ENCODE measurements at regions of chr5 and their contacts with region 1.

Region 1: DNA sequence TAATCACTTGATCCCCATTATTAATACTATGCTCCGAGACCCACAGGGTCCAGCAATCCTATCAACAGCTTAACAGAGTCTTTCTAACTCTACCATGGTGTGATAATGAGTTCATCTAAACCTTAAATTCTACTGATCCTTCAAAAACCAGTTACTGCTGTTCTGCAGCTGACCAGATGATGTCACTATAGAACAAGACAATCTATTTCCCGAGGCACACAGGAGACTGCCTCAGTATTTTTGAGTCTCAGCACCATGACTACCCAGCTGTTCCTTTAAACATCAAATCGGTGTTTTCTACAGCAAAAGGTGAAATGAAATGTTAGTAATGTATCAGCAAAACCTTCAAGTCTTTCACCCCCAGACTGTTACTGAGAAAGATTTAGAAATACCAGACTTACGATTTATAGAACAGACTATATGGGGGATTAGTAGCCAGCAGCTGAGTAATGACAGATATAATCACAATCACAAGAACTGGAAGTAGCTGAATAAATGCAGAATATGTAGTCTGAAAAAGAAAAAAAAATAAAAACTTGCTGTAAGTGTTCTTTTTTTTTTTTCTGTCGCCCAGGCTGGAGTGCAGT is 16.9 kb downstream of the DNAJC18 start:
- DNase-seq: no peak
- H3K4me3 ChIP-seq: no peak overlapping the region
- CTCF ChIP-seq: peak; percentile 72

Region 2: GRCh38 chr5:138967791-138968448 is 454.5 kb before region 1 on chr5:
- CTCF ChIA-PET with region 1: no interaction called
- POLR2A ChIA-PET with region 1: no interaction called
- DNase-seq: no peak
- H3K4me3 ChIP-seq: no peak overlapping the region
- CTCF ChIP-seq: no peak

Region 3: DNA sequence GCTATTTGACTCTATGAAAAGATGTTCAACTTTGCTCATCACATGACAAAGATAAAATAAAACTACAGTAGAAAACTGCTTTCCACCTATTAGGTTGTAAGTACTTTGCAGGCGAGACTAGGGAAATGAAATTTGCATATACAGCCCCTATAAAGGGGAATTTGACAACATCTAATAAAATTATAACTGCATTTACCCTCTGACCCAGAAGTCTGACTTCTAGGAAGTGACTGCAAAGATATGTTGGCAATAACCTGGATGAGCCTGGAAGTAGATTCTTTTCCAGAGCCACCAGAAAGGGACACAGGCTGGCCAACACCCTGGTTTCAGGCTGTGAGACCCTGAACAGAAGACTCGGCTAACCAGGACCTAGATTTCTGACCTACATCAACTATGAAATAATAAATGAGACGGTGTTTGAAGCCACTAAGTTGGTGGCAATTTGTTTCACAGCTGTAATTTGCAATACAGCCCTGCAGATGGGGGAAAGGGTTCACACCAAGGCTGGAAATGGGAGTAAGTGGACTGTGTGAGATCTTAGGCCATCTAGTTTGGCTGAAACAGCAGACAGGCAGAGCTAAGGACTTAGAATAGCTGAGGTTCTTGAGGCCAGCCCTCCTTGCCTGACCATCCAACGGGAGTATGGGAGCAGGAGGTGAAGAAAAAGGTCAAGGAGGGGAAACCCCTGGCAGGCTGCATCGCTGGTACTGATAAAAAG is 330.8 kb before region 1 on chr5:
- CTCF ChIA-PET with region 1: no interaction called
- POLR2A ChIA-PET with region 1: no interaction called
- DNase-seq: no peak
- H3K4me3 ChIP-seq: no peak overlapping the region
- CTCF ChIP-seq: no peak

Region 4: GRCh38 chr5:139439013-139439903 is 16.9 kb after region 1 on chr5 and contains the start of gene DNAJC18:
- CTCF ChIA-PET with region 1: interaction called, 62 read pairs
- POLR2A ChIA-PET with region 1: interaction called, 3 read pairs
- DNase-seq: no peak
- H3K4me3 ChIP-seq: peak within 1 kb of the TSS; percentile 91
- CTCF ChIP-seq: no peak

Region 5: GRCh38 chr5:139482050-139482889 is 59.9 kb after region 1 on chr5 and contains the start of gene STING1:
- CTCF ChIA-PET with region 1: interaction called, 17 read pairs
- POLR2A ChIA-PET with region 1: interaction called, 3 read pairs
- DNase-seq: peak; percentile 87
- H3K4me3 ChIP-seq: peak within 1 kb of the TSS; percentile 71
- CTCF ChIP-seq: no peak

Region 6: DNA sequence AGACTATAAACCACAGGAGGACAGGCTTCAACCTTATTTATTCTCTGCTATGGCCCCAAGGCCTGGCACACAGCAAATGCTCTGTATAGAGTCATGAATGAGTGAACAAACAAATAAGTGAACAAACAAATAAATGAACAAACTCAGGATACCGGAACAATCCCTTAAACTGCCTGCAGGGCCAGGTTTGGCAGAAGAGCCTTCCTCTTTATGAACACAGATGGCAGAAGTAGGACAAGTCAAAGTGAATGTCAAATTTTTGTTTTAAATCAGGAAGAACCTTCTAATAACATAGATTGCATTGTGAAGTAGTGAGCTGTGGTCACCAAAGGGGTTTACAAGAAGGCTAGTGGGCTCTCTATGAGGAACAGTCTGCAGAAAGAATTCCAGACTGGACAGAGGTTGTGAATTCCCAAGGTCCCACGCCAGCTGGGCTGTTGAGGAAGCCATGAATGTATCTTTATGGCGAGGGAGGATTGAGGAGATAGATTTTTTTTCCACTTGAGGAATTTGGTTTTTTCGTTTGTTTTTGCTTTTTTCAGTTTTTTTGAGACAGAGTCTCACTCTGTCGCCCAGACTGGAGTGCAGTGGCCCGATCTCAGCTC is 90.5 kb after region 1 on chr5:
- CTCF ChIA-PET with region 1: interaction called, 730 read pairs
- POLR2A ChIA-PET with region 1: interaction called, 4 read pairs
- DNase-seq: no peak
- H3K4me3 ChIP-seq: no peak overlapping the region
- CTCF ChIP-seq: no peak

Region 7: DNA sequence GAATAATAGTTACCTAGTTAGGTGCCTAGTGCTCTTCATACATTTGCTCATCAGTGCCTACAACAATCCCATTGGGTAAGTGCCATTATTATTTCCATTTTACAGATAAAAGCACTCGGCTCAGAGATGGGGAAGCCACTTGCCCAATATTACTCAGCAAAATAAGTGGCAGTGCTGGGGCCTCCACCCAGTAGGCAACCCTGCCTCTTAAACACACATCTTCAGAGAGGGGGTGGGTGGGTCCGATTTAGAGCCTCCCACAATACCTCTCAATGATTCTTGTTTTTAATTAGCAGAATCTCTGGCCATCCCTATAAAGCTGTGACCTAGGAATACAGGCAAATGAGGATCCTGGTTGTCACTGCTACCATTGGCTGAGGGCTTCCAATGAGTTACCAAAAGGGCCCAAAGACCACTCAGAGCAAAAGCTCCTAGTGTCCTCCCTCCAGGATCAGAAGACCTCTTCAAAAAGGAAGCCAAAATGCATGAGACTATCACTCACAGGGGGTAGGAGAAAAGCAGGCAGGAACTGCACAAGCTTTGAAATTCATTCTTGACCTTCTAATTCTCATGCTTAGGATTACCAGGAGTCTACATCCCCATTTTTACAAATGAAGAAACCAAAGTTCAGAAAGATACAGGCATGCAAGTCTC is 102.7 kb after region 1 on chr5:
- CTCF ChIA-PET with region 1: interaction called, 730 read pairs
- POLR2A ChIA-PET with region 1: no interaction called
- DNase-seq: no peak
- H3K4me3 ChIP-seq: no peak overlapping the region
- CTCF ChIP-seq: no peak